ENCODE measurements at regions of chr19 and their contacts with region 1.

Region 1: DNA sequence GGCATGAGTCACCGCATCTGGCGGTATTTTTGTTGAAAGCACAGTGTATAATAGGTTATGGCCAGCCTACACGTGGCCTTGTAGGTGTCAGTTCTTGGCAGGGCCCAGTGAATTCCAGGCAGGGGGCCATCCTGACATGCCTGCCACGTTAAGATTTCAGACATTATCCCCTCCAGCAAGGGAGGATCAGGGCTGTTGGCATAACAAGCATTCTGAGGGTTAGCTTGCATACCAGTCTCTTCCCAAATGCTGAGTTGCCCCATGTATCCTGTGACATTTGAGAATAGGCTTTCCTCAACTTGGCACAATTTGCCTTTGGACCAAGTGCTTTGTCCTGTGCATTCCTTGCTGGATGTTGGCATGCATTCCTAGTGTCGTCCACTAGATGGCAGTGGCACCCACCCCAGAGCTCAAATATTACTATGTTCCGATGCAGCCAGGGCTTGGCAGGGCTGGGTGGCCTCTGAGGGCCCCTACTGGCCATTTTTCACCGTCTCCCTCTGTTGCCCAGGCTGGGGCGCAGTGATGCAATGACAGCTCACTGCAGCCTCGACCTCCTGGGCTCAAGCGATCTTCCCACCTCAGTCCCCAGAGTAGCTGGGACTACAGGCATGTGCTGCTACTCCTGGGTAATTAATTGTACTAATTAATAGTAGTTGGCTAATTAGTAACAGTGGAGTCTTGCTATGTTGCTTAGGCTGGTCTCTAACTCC is 31.2 kb downstream of the NLRP12 start:
- DNase-seq: peak; percentile 78
- H3K4me3 ChIP-seq: no peak overlapping the region
- H3K27ac ChIP-seq: no peak overlapping the region
- H3K4me1 ChIP-seq: no peaks in the 10 kb centered on the region
- H3K27me3 ChIP-seq: no peaks in the 10 kb centered on the region
- CTCF ChIP-seq: peak; percentile 83 to 90

Region 2: GRCh38 chr19:53659292-53659691 is 133.6 kb before region 1 on chr19:
- CTCF ChIA-PET with region 1: no interaction called
- dilution Hi-C with region 1: loop called (anchors 25 kb)
- in situ Hi-C with region 1: no loop called
- intact Hi-C with region 1: no loop called
- DNase-seq: peak; percentile 9
- H3K4me3 ChIP-seq: no peak overlapping the region
- H3K27ac ChIP-seq: no peak overlapping the region
- H3K4me1 ChIP-seq: no peaks in the 10 kb centered on the region
- H3K27me3 ChIP-seq: no peaks in the 10 kb centered on the region
- CTCF ChIP-seq: peak in 1 of 2 donors; percentile 32

Region 3: GRCh38 chr19:54168174-54168917 is 375.5 kb after region 1 on chr19:
- CTCF ChIA-PET with region 1: no interaction called
- dilution Hi-C with region 1: no loop called
- in situ Hi-C with region 1: no loop called
- intact Hi-C with region 1: no loop called
- DNase-seq: peak; percentile 67
- H3K4me3 ChIP-seq: no peak overlapping the region
- H3K27ac ChIP-seq: no peak overlapping the region
- H3K4me1 ChIP-seq: peaks cover 13% of the 10 kb centered on the region
- H3K27me3 ChIP-seq: no peaks in the 10 kb centered on the region
- CTCF ChIP-seq: peak; percentile 81 to 88